ENCODE measurements at regions of chr5 and their contacts with region 1.

Region 1: DNA sequence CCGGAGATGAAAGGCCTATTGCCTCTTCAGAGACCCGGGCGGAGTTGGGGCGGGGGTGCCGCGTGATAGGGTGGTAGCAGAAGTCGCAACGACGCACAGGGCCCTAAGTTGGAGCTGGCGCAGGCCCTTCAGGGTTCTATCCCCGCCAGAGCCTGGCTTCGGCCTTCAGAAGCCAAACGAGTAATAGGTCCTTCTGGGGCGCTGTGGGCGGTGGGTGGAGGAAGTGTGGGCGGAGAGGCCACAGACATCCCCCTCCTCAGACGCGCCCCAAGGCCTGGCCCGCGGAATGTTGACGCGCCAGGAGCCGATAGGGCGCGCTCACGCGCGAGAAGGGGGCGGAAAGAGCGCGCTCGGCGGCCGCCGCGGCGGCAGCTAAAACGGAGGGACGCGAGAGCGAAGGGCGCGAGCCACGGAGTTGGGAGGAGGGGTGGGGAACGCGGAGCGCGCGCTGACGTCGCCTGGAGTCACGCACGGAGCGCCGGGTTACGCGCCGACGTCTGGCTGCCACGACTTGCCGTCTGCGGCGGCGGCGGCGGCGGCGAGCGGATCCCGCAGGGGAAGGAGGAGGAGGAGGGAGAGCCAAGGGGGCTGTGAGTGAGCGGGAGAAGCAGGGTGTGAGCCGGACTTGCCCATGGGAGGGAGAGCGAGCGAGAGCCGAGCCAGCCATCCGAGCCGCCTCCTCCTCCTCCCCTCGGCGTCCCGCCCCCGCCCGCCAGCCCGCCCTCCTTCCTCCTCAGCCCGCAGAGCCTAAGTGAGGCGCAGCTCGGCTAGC is 6.4 kb upstream of the PURA start:
- DNase-seq: peak; percentile 87 to 96 (median 94)
- ATAC-seq: peak; percentile 92
- H3K4me3 ChIP-seq: peak overlapping the region; percentile 80
- H3K4me3 Mint-ChIP-seq: peak overlapping the region; percentile 93 to 99 (median 97)
- H3K27ac ChIP-seq: peak overlapping the region; percentile 91
- H3K27ac Mint-ChIP-seq: peak overlapping the region; percentile 96 to 99 (median 99)
- H3K4me1 ChIP-seq: peaks cover 19 to 35% of the 10 kb centered on the region in 2 donors
- H3K4me1 Mint-ChIP-seq: peaks cover 30 to 59% (median 47%) of the 10 kb centered on the region in 7 donors
- H3K27me3 ChIP-seq: peaks cover 0 to 7% of the 10 kb centered on the region in 2 donors
- H3K27me3 Mint-ChIP-seq: peaks cover 0 to 77% (median 4%) of the 10 kb centered on the region in 5 donors

Region 2: DNA sequence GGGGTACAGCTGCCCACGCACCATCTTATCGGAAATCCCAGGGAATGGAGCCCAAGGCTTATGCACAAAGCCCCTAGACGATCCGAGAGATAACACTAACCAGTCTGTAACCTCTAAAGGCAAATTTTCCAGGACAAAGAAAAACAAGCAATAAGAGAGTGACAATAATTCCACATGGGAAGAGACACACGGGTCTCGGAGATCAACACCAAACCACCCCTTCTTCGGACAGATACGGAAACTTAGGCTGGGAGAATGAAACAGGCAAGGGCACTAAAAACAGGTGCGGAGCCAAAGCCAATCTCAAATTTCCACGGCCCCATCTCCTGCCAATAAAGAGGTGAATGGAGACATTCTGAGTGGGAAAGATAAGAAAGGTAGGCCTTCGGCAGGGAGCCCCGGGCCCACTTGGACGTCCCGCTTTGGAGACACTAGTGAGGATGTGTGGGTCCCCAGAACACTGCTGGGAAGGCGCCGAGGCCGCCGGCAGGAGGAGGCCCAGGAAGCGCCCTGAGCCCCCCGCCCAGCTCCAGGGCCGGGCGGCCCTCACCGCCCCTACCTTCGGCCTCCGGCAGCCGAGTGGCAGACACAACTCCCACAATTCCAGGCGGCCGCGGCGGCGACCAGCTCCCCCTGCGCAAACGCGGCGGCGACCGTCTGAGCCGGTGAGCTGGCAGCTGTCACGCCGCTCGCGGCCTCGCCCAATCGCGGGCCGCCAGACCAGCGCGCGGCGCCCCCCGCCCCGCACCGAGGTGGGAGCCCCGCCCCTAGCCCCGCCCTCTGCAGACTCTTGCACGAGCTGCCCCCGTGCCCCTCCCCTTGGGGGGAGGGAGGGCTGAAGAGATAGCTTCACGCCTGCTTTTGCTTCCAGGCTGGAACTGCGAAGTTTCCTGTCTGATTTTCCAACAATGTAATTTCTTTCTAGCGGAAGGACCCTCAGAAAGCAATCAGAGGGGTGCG is 909.5 kb before region 1 on chr5 and contains the start of gene SIL1:
- CTCF ChIA-PET with region 1: no interaction called
- POLR2A ChIA-PET with region 1: no interaction called
- intact Hi-C with region 1: loop called in 1 of 2 experiments (anchors 5 kb)
- DNase-seq: peak; percentile 88 to 94 (median 91)
- ATAC-seq: peak; percentile 99
- H3K4me3 ChIP-seq: peak within 1 kb of the TSS; percentile 97
- H3K4me3 Mint-ChIP-seq: peak within 1 kb of the TSS; percentile 83 to 96 (median 90)
- H3K27ac ChIP-seq: peak within 1 kb of the TSS; percentile 89
- H3K27ac Mint-ChIP-seq: peak within 1 kb of the TSS; percentile 86 to 96 (median 91)
- H3K4me1 ChIP-seq: peaks cover 8% of the 10 kb centered on the region in 2 donors
- H3K4me1 Mint-ChIP-seq: peaks cover 17 to 38% (median 26%) of the 10 kb centered on the region in 7 donors
- H3K27me3 ChIP-seq: no peaks in the 10 kb centered on the region
- H3K27me3 Mint-ChIP-seq: no peaks in the 10 kb centered on the region
- total RNA-seq, gene SIL1: 11.9 to 27.1 (median 22.8) TPM

Region 3: GRCh38 chr5:139341650-139342422 is 765.7 kb before region 1 on chr5 and contains the start of gene PAIP2:
- CTCF ChIA-PET with region 1: no interaction called
- POLR2A ChIA-PET with region 1: no interaction called
- intact Hi-C with region 1: loop called (anchors 5 kb)
- DNase-seq: peak; percentile 94 to 98 (median 97)
- ATAC-seq: peak; percentile 95
- H3K4me3 ChIP-seq: peak within 1 kb of the TSS; percentile 96
- H3K4me3 Mint-ChIP-seq: peak within 1 kb of the TSS; percentile 95 to 100 (median 98)
- H3K27ac ChIP-seq: peak within 1 kb of the TSS; percentile 98
- H3K27ac Mint-ChIP-seq: peak within 1 kb of the TSS; percentile 96 to 100 (median 99)
- H3K4me1 ChIP-seq: peaks cover 28 to 30% of the 10 kb centered on the region in 2 donors
- H3K4me1 Mint-ChIP-seq: peaks cover 34 to 65% (median 55%) of the 10 kb centered on the region in 7 donors
- H3K27me3 ChIP-seq: no peaks in the 10 kb centered on the region
- H3K27me3 Mint-ChIP-seq: peaks cover 0 to 5% (median 0%) of the 10 kb centered on the region in 5 donors
- total RNA-seq, gene PAIP2: 88.8 to 121 (median 106) TPM

Region 4: DNA sequence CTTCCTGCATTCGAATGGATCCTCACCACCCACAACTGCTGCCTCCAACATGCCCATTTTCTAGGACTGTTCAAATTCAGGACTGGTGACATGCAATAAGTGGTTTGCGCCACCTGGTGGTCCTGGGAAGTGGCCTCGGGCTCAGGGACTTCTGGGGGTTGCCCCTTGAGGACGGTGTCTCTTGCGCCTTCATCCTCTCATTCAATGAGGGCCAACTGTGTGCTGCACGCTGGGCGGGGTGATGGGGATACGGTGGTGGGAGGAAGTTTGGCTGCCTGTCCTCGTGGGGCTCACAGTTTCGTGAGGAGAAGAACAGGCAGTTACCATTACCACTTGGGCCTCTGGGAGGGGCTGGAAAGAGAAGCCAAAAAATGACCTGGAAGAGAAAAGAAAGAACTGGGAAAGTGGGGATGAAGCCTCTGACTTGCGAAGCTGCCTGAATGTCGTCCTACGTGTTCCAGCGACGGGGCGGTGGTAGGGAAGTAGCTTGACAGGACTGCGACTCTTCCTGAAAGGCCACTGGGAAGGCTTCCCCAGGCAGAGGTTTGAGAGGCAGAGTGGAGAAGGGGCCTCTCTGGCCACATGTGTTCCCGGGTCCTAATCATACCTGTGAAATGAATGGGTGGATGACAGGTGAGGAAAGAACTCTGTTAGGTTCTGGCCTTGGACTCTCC is 262.9 kb before region 1 on chr5:
- CTCF ChIA-PET with region 1: no interaction called
- POLR2A ChIA-PET with region 1: interaction called, 7 read pairs
- intact Hi-C with region 1: loop called in 1 of 2 experiments (anchors 2 kb)
- DNase-seq: peak; percentile 26 to 62 (median 57)
- ATAC-seq: peak; percentile 28
- H3K4me3 ChIP-seq: no peak overlapping the region
- H3K4me3 Mint-ChIP-seq: peak overlapping the region in 2 of 10 donors; percentile 21 to 49
- H3K27ac ChIP-seq: no peak overlapping the region
- H3K27ac Mint-ChIP-seq: no peak overlapping the region
- H3K4me1 ChIP-seq: peaks cover 0 to 5% of the 10 kb centered on the region in 2 donors
- H3K4me1 Mint-ChIP-seq: peaks cover 7 to 17% (median 12%) of the 10 kb centered on the region in 7 donors
- H3K27me3 ChIP-seq: no peaks in the 10 kb centered on the region
- H3K27me3 Mint-ChIP-seq: peaks cover 13 to 59% (median 16%) of the 10 kb centered on the region in 5 donors

Region 5: DNA sequence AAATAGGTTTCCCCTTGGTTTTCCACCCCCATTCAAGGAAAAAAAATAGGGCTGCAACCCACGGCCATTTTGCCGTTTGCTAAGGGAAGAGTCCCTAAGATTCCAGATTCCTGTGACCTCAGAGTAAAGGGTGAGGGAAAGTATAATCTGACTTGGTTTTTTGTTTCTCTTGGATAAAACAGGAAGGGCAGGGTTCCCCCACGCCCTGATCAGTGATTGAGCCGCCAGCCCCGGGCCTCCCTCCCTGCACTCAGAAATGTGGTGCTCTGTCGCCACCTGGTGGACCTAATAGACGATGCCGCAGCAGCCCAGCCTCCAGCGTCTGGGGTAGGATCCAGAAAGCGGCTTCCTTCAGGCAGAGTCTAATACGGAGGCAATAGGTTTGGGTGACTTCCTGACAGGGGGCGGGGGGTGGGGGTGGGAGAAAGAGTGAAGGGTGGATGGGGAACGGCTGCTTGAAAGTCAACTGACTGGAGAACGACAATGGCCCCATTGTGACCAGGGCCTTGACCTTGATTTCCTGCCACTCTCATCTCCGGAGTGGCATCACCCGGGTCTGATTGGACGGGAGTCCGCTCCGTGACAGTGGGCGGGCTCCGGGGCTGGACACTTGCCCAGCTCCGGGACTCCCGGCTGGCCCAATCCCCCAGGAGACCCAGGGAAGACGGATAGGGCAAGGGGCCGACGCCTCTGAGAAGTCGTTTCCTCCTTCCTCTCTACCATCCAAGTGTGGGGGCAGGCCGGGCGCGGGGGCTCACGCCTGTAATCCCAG is 49.7 kb after region 1 on chr5:
- CTCF ChIA-PET with region 1: no interaction called
- POLR2A ChIA-PET with region 1: interaction called, 4 read pairs
- intact Hi-C with region 1: loop called (anchors 1 to 5 kb)
- DNase-seq: peak; percentile 72 to 85 (median 82)
- ATAC-seq: peak; percentile 99
- H3K4me3 ChIP-seq: no peak overlapping the region
- H3K4me3 Mint-ChIP-seq: peak overlapping the region in 9 of 10 donors; percentile 7 to 66 (median 62)
- H3K27ac ChIP-seq: no peak overlapping the region
- H3K27ac Mint-ChIP-seq: peak overlapping the region in 4 of 9 donors; percentile 5 to 51 (median 32)
- H3K4me1 ChIP-seq: peaks cover 0 to 5% of the 10 kb centered on the region in 2 donors
- H3K4me1 Mint-ChIP-seq: peaks cover 3 to 12% (median 8%) of the 10 kb centered on the region in 7 donors
- H3K27me3 ChIP-seq: no peaks in the 10 kb centered on the region
- H3K27me3 Mint-ChIP-seq: peaks cover 0 to under 1% (median 0%) of the 10 kb centered on the region in 5 donors

Region 6: DNA sequence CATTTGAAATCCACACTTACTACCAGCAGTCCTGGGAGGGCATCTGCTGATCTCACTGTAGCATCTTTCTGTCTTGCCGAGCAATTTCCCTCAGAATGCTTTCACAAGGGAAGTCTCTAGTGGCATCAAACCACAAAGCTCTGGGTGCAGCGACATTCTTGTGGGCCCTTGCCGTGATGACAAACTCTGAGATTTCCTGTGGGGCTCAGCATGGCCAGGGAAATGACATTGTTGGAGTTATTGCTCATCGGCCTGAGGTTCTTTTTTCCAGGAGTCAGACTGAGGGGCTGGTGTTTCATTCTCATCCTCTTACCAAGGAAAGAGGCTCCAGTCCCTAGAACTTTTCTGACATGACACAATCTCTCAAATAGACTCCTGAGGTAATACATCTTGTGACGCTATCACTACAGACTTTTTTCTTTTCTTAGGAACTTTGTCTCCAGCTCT is 144.1 kb after region 1 on chr5:
- CTCF ChIA-PET with region 1: no interaction called
- POLR2A ChIA-PET with region 1: no interaction called
- intact Hi-C with region 1: no loop called
- DNase-seq: peak in 8 of 9 donors; percentile 24 to 70 (median 38)
- ATAC-seq: peak; percentile 89
- H3K4me3 ChIP-seq: no peak overlapping the region
- H3K4me3 Mint-ChIP-seq: peak overlapping the region in 8 of 10 donors; percentile 9 to 64 (median 36)
- H3K27ac ChIP-seq: peak overlapping the region; percentile 47
- H3K27ac Mint-ChIP-seq: peak overlapping the region; percentile 57 to 95 (median 78)
- H3K4me1 ChIP-seq: peaks cover 8 to 20% of the 10 kb centered on the region in 2 donors
- H3K4me1 Mint-ChIP-seq: peaks cover 27 to 54% (median 36%) of the 10 kb centered on the region in 7 donors
- H3K27me3 ChIP-seq: no peaks in the 10 kb centered on the region
- H3K27me3 Mint-ChIP-seq: no peaks in the 10 kb centered on the region

Region 7: GRCh38 chr5:140468188-140468587 is 360.7 kb after region 1 on chr5:
- CTCF ChIA-PET with region 1: no interaction called
- POLR2A ChIA-PET with region 1: no interaction called
- intact Hi-C with region 1: no loop called
- DNase-seq: no peak
- ATAC-seq: no peak
- H3K4me3 ChIP-seq: no peak overlapping the region
- H3K4me3 Mint-ChIP-seq: no peak overlapping the region
- H3K27ac ChIP-seq: no peak overlapping the region
- H3K27ac Mint-ChIP-seq: peak overlapping the region in 2 of 9 donors; percentile 12 to 49
- H3K4me1 ChIP-seq: no peaks in the 10 kb centered on the region
- H3K4me1 Mint-ChIP-seq: peaks cover 0 to 12% (median 3%) of the 10 kb centered on the region in 7 donors
- H3K27me3 ChIP-seq: no peaks in the 10 kb centered on the region
- H3K27me3 Mint-ChIP-seq: no peaks in the 10 kb centered on the region

Region 8: DNA sequence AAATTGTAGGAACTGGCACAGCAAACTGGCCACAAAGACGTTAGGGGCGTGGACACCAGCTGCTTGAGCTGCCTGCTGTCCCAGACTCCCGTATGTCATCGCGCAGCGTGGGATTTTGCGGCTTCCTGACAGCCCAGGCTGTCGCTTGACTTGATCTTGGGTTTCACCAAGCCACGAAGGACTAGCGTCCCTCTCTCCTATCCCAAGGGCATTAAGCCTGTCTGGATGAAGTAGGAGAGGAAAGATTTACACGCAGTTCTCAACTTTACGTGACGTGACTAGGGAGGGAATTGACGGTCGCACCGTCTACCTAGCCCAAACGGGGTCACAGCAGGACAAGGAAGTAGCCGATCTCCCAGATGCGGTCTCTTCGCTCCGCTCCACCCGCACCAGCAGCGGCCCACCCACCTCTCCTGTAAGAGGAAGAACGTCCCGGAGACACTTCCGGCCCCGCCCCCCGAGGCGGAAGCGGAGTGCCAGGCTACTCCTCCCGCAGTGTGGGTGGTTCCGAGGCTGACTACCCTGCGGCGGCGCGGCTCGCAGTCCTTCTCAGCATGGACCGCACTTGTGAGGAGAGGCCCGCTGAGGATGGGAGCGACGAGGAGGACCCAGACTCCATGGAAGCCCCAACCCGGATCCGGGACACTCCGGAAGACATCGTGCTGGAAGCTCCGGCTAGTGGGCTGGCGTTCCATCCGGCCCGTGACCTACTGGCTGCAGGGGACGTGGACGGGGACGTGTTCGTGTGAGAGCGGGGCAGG is 557.0 kb after region 1 on chr5 and contains the start of gene WDR55:
- CTCF ChIA-PET with region 1: no interaction called
- POLR2A ChIA-PET with region 1: no interaction called
- intact Hi-C with region 1: loop called in 1 of 2 experiments (anchors 1 kb)
- DNase-seq: peak; percentile 91 to 98 (median 94)
- ATAC-seq: peak; percentile 97
- H3K4me3 ChIP-seq: peak within 1 kb of the TSS; percentile 95
- H3K4me3 Mint-ChIP-seq: peak within 1 kb of the TSS; percentile 96 to 100 (median 98)
- H3K27ac ChIP-seq: peak within 1 kb of the TSS; percentile 97
- H3K27ac Mint-ChIP-seq: peak within 1 kb of the TSS; percentile 93 to 100 (median 98)
- H3K4me1 ChIP-seq: peaks cover 0 to 8% of the 10 kb centered on the region in 2 donors
- H3K4me1 Mint-ChIP-seq: peaks cover 17 to 48% (median 38%) of the 10 kb centered on the region in 7 donors
- H3K27me3 ChIP-seq: no peaks in the 10 kb centered on the region
- H3K27me3 Mint-ChIP-seq: no peaks in the 10 kb centered on the region
- total RNA-seq, gene WDR55: 28.5 to 47.6 (median 37.8) TPM